Panc1 (cell line): ENCODE measurements at regions of chr13 and their contacts with region 1.

Region 1: GRCh38 chr13:32019612-32020233 is 11.9 kb upstream of the FRY start:
- DNase-seq: no peak
- ATAC-seq: peak; percentile 65; the same call in 1 of the 2 replicates
- H3K4me3 ChIP-seq: no peak overlapping the region
- H3K27ac ChIP-seq: no peak overlapping the region
- H3K4me1 ChIP-seq: no peaks in the 10 kb centered on the region
- H3K27me3 ChIP-seq: no peaks in the 10 kb centered on the region
- CTCF ChIP-seq: peak; percentile 70

Region 2: DNA sequence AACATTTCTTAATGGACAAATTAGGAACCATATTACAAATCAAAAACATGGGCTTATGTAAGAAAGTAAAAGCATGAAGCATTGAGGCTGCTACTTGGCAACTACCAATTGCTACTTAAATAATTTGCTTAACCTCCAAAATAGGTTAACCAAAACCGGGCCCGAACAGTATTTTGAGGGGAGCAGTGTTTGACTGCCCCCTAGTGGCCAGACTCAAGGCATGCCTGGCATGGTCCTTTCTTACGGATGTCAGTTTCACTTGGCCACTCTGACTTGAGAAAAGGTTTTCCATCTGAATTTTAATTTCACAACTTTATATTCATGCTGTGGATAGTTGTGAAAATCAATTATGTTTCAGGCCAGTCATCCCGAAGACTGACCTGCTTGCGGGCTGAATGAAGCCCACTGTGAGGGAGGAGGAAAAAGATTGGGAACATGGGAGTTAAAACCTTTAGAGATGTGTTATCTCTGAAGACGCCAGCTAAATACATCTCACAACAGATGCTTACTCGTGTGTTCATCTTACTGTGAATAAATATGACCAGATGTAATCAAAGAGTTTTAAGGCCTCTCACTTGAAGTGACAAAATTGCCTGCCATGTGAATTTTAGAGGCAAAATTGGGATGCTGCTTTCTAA is 277.5 kb before region 1 on chr13:
- CTCF ChIA-PET with region 1: no interaction called
- POLR2A ChIA-PET with region 1: no interaction called
- in situ Hi-C with region 1: no loop called
- intact Hi-C with region 1: no loop called
- DNase-seq: peak; percentile 22
- ATAC-seq: peak; percentile 91
- H3K4me3 ChIP-seq: no peak overlapping the region
- H3K27ac ChIP-seq: no peak overlapping the region
- H3K4me1 ChIP-seq: no peaks in the 10 kb centered on the region
- H3K27me3 ChIP-seq: 0 out of 2 replicates have a peak, but pooled peaks cover 3% of the 10 kb centered on the region
- CTCF ChIP-seq: peak; percentile 91

Region 3: DNA sequence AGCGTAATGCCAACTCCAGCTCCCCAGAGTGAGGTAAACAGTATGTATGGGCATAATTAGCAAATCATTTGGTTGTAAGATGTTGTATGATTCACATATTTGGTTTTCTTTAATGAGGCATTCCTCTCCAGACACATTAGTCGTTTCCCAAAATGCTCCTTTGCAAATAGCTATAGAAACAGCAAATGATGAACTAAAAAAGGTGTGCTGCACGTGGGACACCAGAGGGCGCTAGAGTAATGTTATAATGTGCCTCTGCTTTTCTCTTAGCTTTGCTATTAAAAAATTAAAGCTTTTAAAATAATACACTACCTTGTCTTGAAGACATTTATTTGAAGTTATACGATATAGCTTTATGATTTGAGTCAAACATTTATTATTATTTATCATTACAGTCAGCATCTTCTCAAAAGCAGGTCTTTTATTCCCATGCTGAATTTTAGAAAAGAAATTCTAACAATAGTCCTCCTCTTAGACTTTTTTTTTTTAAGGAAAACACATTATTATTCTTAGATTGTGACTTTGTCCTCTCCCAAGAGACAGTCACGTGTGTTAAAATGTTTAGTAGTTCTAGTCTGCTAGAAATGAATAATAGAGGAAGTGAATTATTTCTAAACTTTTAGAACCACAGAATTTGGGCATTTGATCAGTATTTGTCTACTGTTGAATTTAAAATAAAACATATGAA is 109.7 kb before region 1 on chr13:
- CTCF ChIA-PET with region 1: no interaction called
- POLR2A ChIA-PET with region 1: no interaction called
- in situ Hi-C with region 1: no loop called
- intact Hi-C with region 1: loop called (anchors 10 kb)
- DNase-seq: peak; percentile 20
- ATAC-seq: no peak
- H3K4me3 ChIP-seq: no peak overlapping the region
- H3K27ac ChIP-seq: no peak overlapping the region
- H3K4me1 ChIP-seq: no peaks in the 10 kb centered on the region
- H3K27me3 ChIP-seq: no peaks in the 10 kb centered on the region; the same call in 1 of the 2 replicates
- CTCF ChIP-seq: peak; percentile 74; the same call in 1 of the 2 replicates

Region 4: GRCh38 chr13:32315238-32316027 is 295.7 kb after region 1 on chr13 and contains the starts of genes BRCA2 and ZAR1L:
- CTCF ChIA-PET with region 1: no interaction called
- POLR2A ChIA-PET with region 1: no interaction called
- in situ Hi-C with region 1: no loop called
- intact Hi-C with region 1: loop called (anchors 10 kb)
- DNase-seq: peak; percentile 17
- ATAC-seq: peak; percentile 99
- H3K4me3 ChIP-seq: peak within 1 kb of the TSS; percentile 73 to 90
- H3K27ac ChIP-seq: peak within 1 kb of the TSS; percentile 89
- H3K4me1 ChIP-seq: peaks cover 4% of the 10 kb centered on the region; the same call in 1 of the 2 replicates
- H3K27me3 ChIP-seq: no peaks in the 10 kb centered on the region
- CTCF ChIP-seq: no peak
- total RNA-seq, gene BRCA2: 8.4 TPM
- total RNA-seq, gene ZAR1L: not detected

Region 5: GRCh38 chr13:32347651-32348050 is 327.9 kb after region 1 on chr13:
- CTCF ChIA-PET with region 1: no interaction called
- POLR2A ChIA-PET with region 1: no interaction called
- in situ Hi-C with region 1: no loop called
- intact Hi-C with region 1: no loop called
- DNase-seq: no peak
- ATAC-seq: no peak
- H3K4me3 ChIP-seq: no peak overlapping the region
- H3K27ac ChIP-seq: no peak overlapping the region
- H3K4me1 ChIP-seq: no peaks in the 10 kb centered on the region
- H3K27me3 ChIP-seq: no peaks in the 10 kb centered on the region
- CTCF ChIP-seq: no peak